CD4-positive, alpha-beta memory T cell (primary cell): ENCODE measurements at regions of chr17 and their contacts with region 1.

Region 1: DNA sequence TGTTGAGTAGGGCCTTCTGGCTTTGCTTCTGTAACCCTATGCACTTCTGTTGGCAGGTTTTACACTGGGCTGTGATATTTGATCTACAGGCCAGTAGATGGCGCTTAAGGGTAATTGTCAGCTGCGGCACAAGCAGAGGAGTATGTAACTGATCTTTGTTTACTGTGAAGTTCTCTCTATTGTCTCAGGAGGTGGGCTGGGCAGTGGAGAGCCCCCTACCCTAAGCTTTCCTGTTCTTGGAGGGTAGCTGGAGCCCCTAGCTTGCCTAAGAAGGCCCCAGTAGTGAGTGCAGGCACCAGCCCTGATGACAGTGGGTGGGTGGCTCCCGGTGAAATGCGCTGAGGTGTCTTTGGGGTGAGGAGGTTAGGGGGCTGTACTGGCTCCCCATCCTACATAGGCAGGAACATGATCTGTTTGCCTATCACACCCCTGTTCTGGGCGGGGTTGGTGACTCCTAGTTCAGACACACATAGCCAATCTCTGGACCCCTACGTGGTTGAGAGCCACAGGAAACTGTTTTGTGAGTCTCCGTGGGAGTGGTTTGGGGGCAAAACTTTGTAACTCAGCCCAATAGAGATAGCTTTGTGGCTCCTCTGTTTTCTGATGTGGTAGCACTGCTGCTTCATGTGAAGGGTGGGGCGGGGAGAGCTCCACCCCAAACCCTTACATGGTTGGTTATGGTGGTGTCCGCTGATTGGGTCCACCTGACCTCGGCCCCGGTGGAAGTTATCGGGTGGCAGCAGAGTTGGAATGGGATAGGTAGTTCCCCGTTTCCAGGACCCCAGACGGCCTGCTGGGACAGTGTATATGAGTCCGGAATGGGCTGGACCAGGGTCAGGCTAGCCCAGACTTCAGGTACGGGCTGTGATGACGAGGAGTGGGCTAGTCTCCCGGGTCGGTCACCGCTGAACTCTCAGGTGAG is 60.4 kb downstream of the SLFN11 start:
- DNase-seq: peak; percentile 89 to 98 (median 90)
- H3K4me3 ChIP-seq: peak overlapping the region; percentile 7 to 60
- H3K4me3 Mint-ChIP-seq: peak overlapping the region; percentile 89 to 98 (median 94)
- H3K27ac ChIP-seq: peak overlapping the region; percentile 60
- H3K27ac Mint-ChIP-seq: peak overlapping the region; percentile 89 to 100 (median 98)
- H3K4me1 ChIP-seq: peaks cover 31% of the 10 kb centered on the region
- H3K4me1 Mint-ChIP-seq: peaks cover 42 to 72% (median 58%) of the 10 kb centered on the region in 4 donors
- H3K27me3 ChIP-seq: no peaks in the 10 kb centered on the region
- H3K27me3 Mint-ChIP-seq: no peaks in the 10 kb centered on the region

Region 2: DNA sequence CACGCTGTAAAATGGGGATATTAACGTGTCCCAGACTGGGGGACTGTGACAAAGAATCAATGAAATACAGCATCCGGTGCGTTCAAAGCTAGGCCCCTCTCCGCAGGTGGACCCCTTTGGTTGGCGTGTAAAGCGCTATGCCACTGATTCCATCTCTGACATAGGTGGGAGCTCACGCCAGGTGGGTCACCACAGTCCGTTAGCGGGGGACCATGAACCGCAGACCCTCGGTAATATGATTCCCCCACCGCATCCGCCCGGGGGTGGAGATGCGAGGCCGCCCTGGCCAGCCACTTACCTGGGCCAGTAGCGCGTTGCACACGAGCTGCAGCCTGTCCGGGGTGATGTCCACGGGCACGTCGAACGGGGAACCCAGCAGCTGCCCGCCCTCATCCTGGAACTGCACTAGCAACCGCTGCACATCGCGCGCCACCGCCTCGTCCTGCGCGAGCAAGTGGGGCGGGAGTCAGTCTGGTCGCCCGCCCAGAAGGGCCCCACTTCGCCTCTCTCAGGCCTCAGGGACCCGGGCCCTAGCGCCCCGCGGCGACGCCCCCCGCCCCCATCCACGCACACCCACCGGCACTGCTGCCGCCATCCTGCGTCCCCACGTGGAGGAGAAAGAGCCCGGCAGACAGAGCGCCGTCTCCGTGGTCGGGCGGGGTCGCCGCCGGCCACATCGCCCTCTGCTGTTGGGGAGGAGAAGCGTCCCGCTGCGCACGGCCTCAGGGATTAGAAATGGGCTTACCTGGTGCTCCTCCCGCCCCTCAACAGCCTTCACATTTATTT is 171.2 kb before region 1 on chr17 and contains the start of gene NLE1:
- CTCF ChIA-PET with region 1: interaction called, 3 read pairs
- POLR2A ChIA-PET with region 1: interaction called, 3 read pairs
- intact Hi-C with region 1: loop called (anchors 1 kb)
- DNase-seq: peak; percentile 85 to 89 (median 87)
- H3K4me3 ChIP-seq: peak within 1 kb of the TSS; percentile 80 to 99
- H3K4me3 Mint-ChIP-seq: peak within 1 kb of the TSS; percentile 82 to 91 (median 88)
- H3K27ac ChIP-seq: peak within 1 kb of the TSS; percentile 77
- H3K27ac Mint-ChIP-seq: peak within 1 kb of the TSS; percentile 72 to 91 (median 78)
- H3K4me1 ChIP-seq: peaks cover 14% of the 10 kb centered on the region
- H3K4me1 Mint-ChIP-seq: peaks cover 8 to 32% (median 20%) of the 10 kb centered on the region in 4 donors
- H3K27me3 ChIP-seq: no peaks in the 10 kb centered on the region
- H3K27me3 Mint-ChIP-seq: no peaks in the 10 kb centered on the region
- total RNA-seq, gene NLE1: 20.1 to 20.5 TPM

Region 3: DNA sequence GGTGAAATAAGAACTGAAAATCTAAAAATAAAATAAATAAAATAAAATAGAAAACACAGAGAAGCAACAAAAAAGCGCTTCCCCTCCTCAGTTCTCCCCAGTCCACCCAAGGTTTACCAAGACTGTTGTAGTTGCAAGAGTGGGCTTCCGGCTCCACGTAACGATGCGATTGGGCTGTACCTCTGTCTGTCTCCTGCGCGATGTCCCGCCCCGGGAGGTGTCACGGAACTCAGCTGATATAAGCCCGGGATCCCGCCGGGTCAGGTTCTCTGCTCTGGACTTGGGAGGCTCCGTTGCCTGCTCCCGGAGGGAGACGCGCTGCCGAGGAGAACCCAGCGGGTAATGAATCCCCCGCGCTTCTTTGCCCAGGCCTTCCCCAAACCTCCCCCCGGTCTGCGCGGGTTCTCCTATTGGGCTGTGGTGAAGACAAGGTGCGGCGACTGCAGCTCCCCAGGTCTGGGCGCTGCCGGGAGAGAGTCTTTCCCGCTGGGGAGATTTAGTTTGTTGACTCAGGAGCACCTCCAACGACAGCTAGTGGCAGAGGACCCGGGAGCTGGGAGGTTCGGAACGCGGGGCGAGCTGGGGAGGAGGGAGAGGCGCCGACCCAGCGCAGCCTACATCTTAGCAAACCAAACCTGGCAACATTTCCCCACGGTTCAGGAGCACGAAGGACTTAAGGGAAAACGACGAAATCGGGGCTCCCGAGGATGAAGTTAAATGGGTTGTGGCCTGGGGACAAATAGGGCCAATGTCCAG is 70.1 kb before region 1 on chr17 and contains the start of gene SLFN5:
- CTCF ChIA-PET with region 1: interaction called, 9 read pairs
- POLR2A ChIA-PET with region 1: interaction called, 70 read pairs
- intact Hi-C with region 1: loop called (anchors 1 kb)
- DNase-seq: peak; percentile 92 to 95 (median 94)
- H3K4me3 ChIP-seq: peak within 1 kb of the TSS; percentile 87 to 99
- H3K4me3 Mint-ChIP-seq: peak within 1 kb of the TSS; percentile 98 to 100 (median 99)
- H3K27ac ChIP-seq: peak within 1 kb of the TSS; percentile 93
- H3K27ac Mint-ChIP-seq: peak within 1 kb of the TSS; percentile 97 to 100 (median 99)
- H3K4me1 ChIP-seq: peaks cover 53% of the 10 kb centered on the region
- H3K4me1 Mint-ChIP-seq: peaks cover 40 to 87% (median 55%) of the 10 kb centered on the region in 4 donors
- H3K27me3 ChIP-seq: no peaks in the 10 kb centered on the region
- H3K27me3 Mint-ChIP-seq: no peaks in the 10 kb centered on the region
- total RNA-seq, gene SLFN5: 182 to 188 TPM

Region 4: GRCh38 chr17:35337364-35337763 is 24.3 kb after region 1 on chr17:
- CTCF ChIA-PET with region 1: interaction called, 10 read pairs
- POLR2A ChIA-PET with region 1: interaction called, 4 read pairs
- intact Hi-C with region 1: loop called (anchors 2 kb)
- DNase-seq: no peak
- H3K4me3 ChIP-seq: no peak overlapping the region
- H3K4me3 Mint-ChIP-seq: no peak overlapping the region
- H3K27ac ChIP-seq: no peak overlapping the region
- H3K27ac Mint-ChIP-seq: peak overlapping the region in 1 of 7 donors; percentile 72
- H3K4me1 ChIP-seq: peaks cover 15% of the 10 kb centered on the region
- H3K4me1 Mint-ChIP-seq: peaks cover 9 to 16% (median 14%) of the 10 kb centered on the region in 4 donors
- H3K27me3 ChIP-seq: no peaks in the 10 kb centered on the region
- H3K27me3 Mint-ChIP-seq: peaks cover 0 to 1% of the 10 kb centered on the region in 2 donors

Region 5: DNA sequence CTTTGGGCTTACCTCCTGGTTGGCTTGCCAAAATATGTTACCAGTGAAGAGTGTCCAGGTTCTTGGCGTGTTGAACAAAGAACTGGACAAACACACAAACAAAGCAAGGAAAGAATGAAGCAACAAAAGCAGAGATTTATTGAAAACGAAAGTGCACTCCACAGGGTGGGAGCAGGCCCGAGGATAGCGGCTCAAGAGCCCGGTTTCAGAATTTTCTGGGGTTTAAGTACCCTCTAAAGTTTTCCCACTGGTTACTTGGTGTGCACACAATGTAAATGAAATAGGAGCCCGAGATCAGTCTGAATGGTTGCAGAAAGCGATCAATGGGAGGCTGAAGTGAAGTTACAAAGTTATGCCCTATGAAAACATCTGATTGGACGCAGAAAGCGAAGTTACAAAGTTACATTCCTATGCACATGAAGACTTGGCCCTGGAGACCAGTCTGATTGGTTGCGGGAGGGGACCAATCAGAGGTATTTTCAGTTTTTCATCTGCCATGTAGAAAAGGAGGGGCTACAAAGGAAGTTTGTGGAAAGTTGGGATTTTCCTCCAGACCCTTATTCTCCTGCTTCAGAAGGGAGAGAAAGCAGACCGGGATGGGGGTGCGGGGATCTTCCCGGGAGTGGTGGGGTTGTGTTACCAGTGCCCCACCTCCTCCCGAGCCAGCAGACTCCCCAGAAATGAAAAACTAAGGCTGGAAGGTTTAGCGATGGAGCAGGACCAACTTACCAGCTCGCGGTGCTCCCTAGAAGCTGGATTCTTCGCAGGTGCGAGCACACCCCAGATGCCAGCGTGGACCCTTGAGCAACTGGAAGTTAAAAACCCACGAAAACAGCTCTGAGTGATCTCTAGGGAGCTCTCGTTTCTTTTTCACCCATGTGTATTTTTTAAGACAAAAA is 119.4 kb after region 1 on chr17 and contains the start of gene SLFN12:
- CTCF ChIA-PET with region 1: interaction called, 7 read pairs
- POLR2A ChIA-PET with region 1: interaction called, 16 read pairs
- intact Hi-C with region 1: loop called (anchors 2 kb)
- DNase-seq: peak; percentile 67 to 74 (median 72)
- H3K4me3 ChIP-seq: peak within 1 kb of the TSS; percentile 79 to 83
- H3K4me3 Mint-ChIP-seq: peak within 1 kb of the TSS; percentile 93 to 100 (median 97)
- H3K27ac ChIP-seq: peak within 1 kb of the TSS; percentile 61
- H3K27ac Mint-ChIP-seq: peak within 1 kb of the TSS; percentile 88 to 97 (median 94)
- H3K4me1 ChIP-seq: peaks cover 44% of the 10 kb centered on the region
- H3K4me1 Mint-ChIP-seq: peaks cover 32 to 68% (median 48%) of the 10 kb centered on the region in 4 donors
- H3K27me3 ChIP-seq: no peaks in the 10 kb centered on the region
- H3K27me3 Mint-ChIP-seq: no peaks in the 10 kb centered on the region
- total RNA-seq, gene SLFN12: 6.5 to 8.9 TPM

Region 6: GRCh38 chr17:35486920-35487732 is 174.1 kb after region 1 on chr17:
- CTCF ChIA-PET with region 1: interaction called, 67 read pairs
- POLR2A ChIA-PET with region 1: interaction called, 97 read pairs
- intact Hi-C with region 1: loop called (anchors 1 kb)
- DNase-seq: peak; percentile 65 to 86 (median 71)
- H3K4me3 ChIP-seq: peak overlapping the region; percentile 57 to 75
- H3K4me3 Mint-ChIP-seq: peak overlapping the region; percentile 94 to 98 (median 96)
- H3K27ac ChIP-seq: peak overlapping the region; percentile 69
- H3K27ac Mint-ChIP-seq: peak overlapping the region; percentile 94 to 99 (median 97)
- H3K4me1 ChIP-seq: peaks cover 42% of the 10 kb centered on the region
- H3K4me1 Mint-ChIP-seq: peaks cover 34 to 89% (median 63%) of the 10 kb centered on the region in 4 donors
- H3K27me3 ChIP-seq: no peaks in the 10 kb centered on the region
- H3K27me3 Mint-ChIP-seq: no peaks in the 10 kb centered on the region

Region 7: DNA sequence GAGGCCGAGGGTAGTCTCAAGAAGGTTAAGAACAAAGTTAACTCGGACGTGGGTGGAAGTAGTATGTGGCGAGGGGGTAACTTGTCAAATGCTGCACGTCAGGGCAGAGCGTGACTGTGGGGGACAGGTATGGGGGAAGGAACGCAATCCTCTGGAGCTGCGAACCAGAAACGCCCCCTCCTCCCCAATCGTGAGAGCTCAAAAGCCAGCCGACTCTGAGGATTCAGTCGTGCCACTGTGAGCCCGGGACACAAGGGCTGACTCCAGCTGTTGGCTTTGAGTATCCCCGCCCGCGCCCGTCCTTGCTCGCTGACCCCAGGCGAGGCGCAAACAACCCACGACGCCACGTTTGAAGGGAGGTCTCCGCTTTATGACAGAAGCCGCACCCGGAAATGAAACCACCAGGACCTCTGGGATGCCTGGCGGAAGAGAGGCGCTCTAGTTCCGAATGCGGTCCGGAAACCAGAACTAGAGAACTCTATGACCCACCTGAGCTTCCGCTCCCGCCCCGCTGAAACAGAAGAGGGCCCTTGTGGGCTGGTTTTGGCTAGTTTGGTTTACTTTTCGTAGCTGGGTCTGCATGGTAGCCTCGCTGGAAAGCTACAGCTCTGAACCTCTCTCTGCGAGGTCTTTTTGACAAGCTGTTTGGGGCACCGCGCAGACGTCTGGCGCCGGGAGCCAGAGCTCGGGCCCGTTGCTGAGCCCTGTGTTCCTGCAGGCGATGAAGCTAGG is 265.3 kb after region 1 on chr17 and contains the start of gene PEX12:
- CTCF ChIA-PET with region 1: interaction called, 4 read pairs
- POLR2A ChIA-PET with region 1: interaction called, 27 read pairs
- intact Hi-C with region 1: loop called (anchors 2 kb)
- DNase-seq: peak; percentile 87 to 95 (median 91)
- H3K4me3 ChIP-seq: peak within 1 kb of the TSS; percentile 81 to 90
- H3K4me3 Mint-ChIP-seq: peak within 1 kb of the TSS; percentile 95 to 99 (median 97)
- H3K27ac ChIP-seq: peak within 1 kb of the TSS; percentile 89
- H3K27ac Mint-ChIP-seq: peak within 1 kb of the TSS; percentile 97 to 100 (median 99)
- H3K4me1 ChIP-seq: peaks cover 24% of the 10 kb centered on the region
- H3K4me1 Mint-ChIP-seq: peaks cover 6 to 34% (median 26%) of the 10 kb centered on the region in 4 donors
- H3K27me3 ChIP-seq: no peaks in the 10 kb centered on the region
- H3K27me3 Mint-ChIP-seq: no peaks in the 10 kb centered on the region
- total RNA-seq, gene PEX12: 8.2 to 8.5 TPM